ENCODE measurements at regions of chr13 and their contacts with region 1.

Region 1: DNA sequence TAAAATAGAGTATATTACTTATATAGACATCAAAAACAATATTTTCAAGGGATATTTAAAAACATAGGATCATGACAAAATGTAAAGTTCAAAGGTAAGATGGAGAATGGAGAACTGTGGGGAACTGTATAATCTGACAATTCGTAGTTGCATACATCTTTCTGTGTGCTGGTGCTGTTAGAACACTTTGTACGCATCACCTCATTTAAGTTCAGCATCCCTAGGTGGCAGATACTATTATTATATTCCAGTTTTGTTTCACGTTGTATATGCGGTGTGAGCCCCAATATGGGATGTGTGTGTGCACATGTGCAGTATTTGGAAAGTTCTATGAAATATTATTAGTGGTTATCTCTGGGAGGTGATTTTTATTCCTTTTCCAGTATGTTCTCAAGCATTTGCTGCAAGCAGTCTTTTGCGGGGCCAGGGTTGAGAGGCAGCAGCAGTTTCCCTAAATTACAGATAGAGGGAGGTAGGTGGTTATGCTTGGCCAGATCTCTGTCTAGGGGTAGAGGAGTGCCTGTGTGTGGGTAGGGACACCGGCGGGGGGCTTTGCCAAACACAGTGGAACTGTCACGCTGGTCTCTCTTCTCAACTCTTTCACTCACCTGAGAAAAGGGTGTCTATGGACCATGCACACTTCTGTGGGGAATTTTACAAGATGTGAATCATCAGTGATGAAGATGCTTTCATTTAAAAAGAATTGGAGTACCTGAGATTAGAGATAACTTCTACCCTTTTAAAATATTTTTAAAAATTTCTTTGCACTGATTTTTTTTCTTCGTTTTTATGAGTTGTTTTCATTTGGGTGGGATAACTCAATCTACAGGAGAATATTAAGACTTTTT is 55.6 kb upstream of the ALOX5AP start:
- DNase-seq: peak; percentile 20
- ATAC-seq: peak; percentile 89
- H3K4me3 ChIP-seq: no peak overlapping the region
- H3K27ac ChIP-seq: no peak overlapping the region
- H3K4me1 ChIP-seq: no peaks in the 10 kb centered on the region
- H3K27me3 ChIP-seq: peaks cover 0 to 3% of the 10 kb centered on the region in 2 experiments; a peak in 2 of 5 replicates
- CTCF ChIP-seq: peak; percentile 51
- EP300 ChIP-seq: no peak
- POLR2A ChIP-seq: no peak
- RAD21 ChIP-seq: no peak

Region 2: GRCh38 chr13:30607908-30608307 is 71.8 kb before region 1 on chr13:
- CTCF ChIA-PET with region 1: no interaction called
- POLR2A ChIA-PET with region 1: no interaction called
- in situ Hi-C with region 1: no loop called
- intact Hi-C with region 1: no loop called
- DNase-seq: no peak
- ATAC-seq: no peak
- H3K4me3 ChIP-seq: no peak overlapping the region
- H3K27ac ChIP-seq: no peak overlapping the region
- H3K4me1 ChIP-seq: no peaks in the 10 kb centered on the region
- H3K27me3 ChIP-seq: no peaks in the 10 kb centered on the region; a peak in 1 of 5 replicates
- CTCF ChIP-seq: no peak
- EP300 ChIP-seq: no peak
- POLR2A ChIP-seq: no peak
- RAD21 ChIP-seq: no peak

Region 3: GRCh38 chr13:30712536-30713532 is 33.1 kb after region 1 on chr13:
- CTCF ChIA-PET with region 1: no interaction called
- POLR2A ChIA-PET with region 1: no interaction called
- in situ Hi-C with region 1: no loop called
- intact Hi-C with region 1: no loop called
- DNase-seq: no peak
- ATAC-seq: no peak
- H3K4me3 ChIP-seq: no peak overlapping the region
- H3K27ac ChIP-seq: no peak overlapping the region
- H3K4me1 ChIP-seq: no peaks in the 10 kb centered on the region
- H3K27me3 ChIP-seq: no peaks in the 10 kb centered on the region
- CTCF ChIP-seq: no peak
- EP300 ChIP-seq: no peak
- POLR2A ChIP-seq: no peak
- RAD21 ChIP-seq: no peak

Region 4: GRCh38 chr13:30739761-30740642 is 60.3 kb after region 1 on chr13:
- CTCF ChIA-PET with region 1: no interaction called
- POLR2A ChIA-PET with region 1: no interaction called
- in situ Hi-C with region 1: loop called (anchors 10 kb)
- intact Hi-C with region 1: no loop called
- DNase-seq: no peak
- ATAC-seq: no peak
- H3K4me3 ChIP-seq: no peak overlapping the region
- H3K27ac ChIP-seq: no peak overlapping the region
- H3K4me1 ChIP-seq: peaks cover 49% of the 10 kb centered on the region
- H3K27me3 ChIP-seq: peaks cover 1 to 7% of the 10 kb centered on the region in 2 experiments; a peak in 1 of 5 replicates
- CTCF ChIP-seq: no peak
- EP300 ChIP-seq: no peak
- POLR2A ChIP-seq: no peak
- RAD21 ChIP-seq: no peak

Region 5: GRCh38 chr13:30792285-30793000 is 112.7 kb after region 1 on chr13:
- CTCF ChIA-PET with region 1: no interaction called
- POLR2A ChIA-PET with region 1: no interaction called
- in situ Hi-C with region 1: loop called (anchors 5 kb)
- intact Hi-C with region 1: no loop called
- DNase-seq: peak; percentile 61
- ATAC-seq: peak; percentile 98
- H3K4me3 ChIP-seq: peak overlapping the region in 1 of 3 experiments; percentile 30; a peak in 2 of 6 replicates
- H3K27ac ChIP-seq: no peak overlapping the region
- H3K4me1 ChIP-seq: peaks cover 31% of the 10 kb centered on the region
- H3K27me3 ChIP-seq: no peaks in the 10 kb centered on the region
- CTCF ChIP-seq: peak; percentile 36
- EP300 ChIP-seq: no peak
- POLR2A ChIP-seq: no peak
- RAD21 ChIP-seq: no peak

Region 6: GRCh38 chr13:30857018-30857417 is 177.3 kb after region 1 on chr13:
- CTCF ChIA-PET with region 1: no interaction called
- POLR2A ChIA-PET with region 1: no interaction called
- in situ Hi-C with region 1: loop called (anchors 5 kb)
- intact Hi-C with region 1: no loop called
- DNase-seq: no peak
- ATAC-seq: peak; percentile 89
- H3K4me3 ChIP-seq: no peak overlapping the region
- H3K27ac ChIP-seq: no peak overlapping the region
- H3K4me1 ChIP-seq: peaks cover 46% of the 10 kb centered on the region
- H3K27me3 ChIP-seq: no peaks in the 10 kb centered on the region; a peak in 2 of 5 replicates
- CTCF ChIP-seq: peak; percentile 46
- EP300 ChIP-seq: no peak
- POLR2A ChIP-seq: no peak
- RAD21 ChIP-seq: no peak

Region 7: GRCh38 chr13:30865123-30866049 is 185.7 kb after region 1 on chr13:
- CTCF ChIA-PET with region 1: interaction called, 7 read pairs
- POLR2A ChIA-PET with region 1: no interaction called
- in situ Hi-C with region 1: no loop called
- intact Hi-C with region 1: loop called (anchors 2 kb)
- DNase-seq: peak; percentile 80
- ATAC-seq: peak; percentile 97
- H3K4me3 ChIP-seq: peak overlapping the region in 2 of 3 experiments; percentile 40 to 54; a peak in 3 of 6 replicates
- H3K27ac ChIP-seq: peak overlapping the region; percentile 7
- H3K4me1 ChIP-seq: peaks cover 64% of the 10 kb centered on the region
- H3K27me3 ChIP-seq: no peaks in the 10 kb centered on the region; a peak in 1 of 5 replicates
- CTCF ChIP-seq: peak; percentile 97
- EP300 ChIP-seq: no peak
- POLR2A ChIP-seq: peak in 1 of 2 experiments; percentile 21; a peak in 1 of 4 replicates
- RAD21 ChIP-seq: peak; percentile 93